ENCODE measurements at regions of chr3 and their contacts with region 1.

Region 1: GRCh38 chr3:32438596-32439344 is 47.1 kb downstream of the CMTM7 start:
- DNase-seq: peak; percentile 83
- ATAC-seq: peak; percentile 85
- H3K4me3 ChIP-seq: peak overlapping the region in 1 of 5 experiments; percentile 18
- H3K4me3 Mint-ChIP-seq: peak overlapping the region; percentile 81
- H3K27ac ChIP-seq: peak overlapping the region; percentile 81 to 82
- H3K27ac Mint-ChIP-seq: peak overlapping the region; percentile 96
- H3K4me1 ChIP-seq: peaks cover 68 to 74% of the 10 kb centered on the region in 2 donors
- H3K4me1 Mint-ChIP-seq: peaks cover 78% of the 10 kb centered on the region
- H3K27me3 ChIP-seq: no peaks in the 10 kb centered on the region
- H3K27me3 Mint-ChIP-seq: no peaks in the 10 kb centered on the region
- CTCF ChIP-seq: no peak

Region 2: GRCh38 chr3:32420126-32421038 is 18.4 kb before region 1 on chr3:
- CTCF ChIA-PET with region 1: interaction called, 15 read pairs
- POLR2A ChIA-PET with region 1: interaction called, 10 read pairs
- intact Hi-C with region 1: loop called (anchors 1 kb)
- DNase-seq: peak; percentile 80
- ATAC-seq: peak; percentile 77
- H3K4me3 ChIP-seq: peak overlapping the region in 3 of 5 experiments; percentile 2 to 38 (median 11)
- H3K4me3 Mint-ChIP-seq: peak overlapping the region; percentile 84
- H3K27ac ChIP-seq: peak overlapping the region; percentile 79 to 86
- H3K27ac Mint-ChIP-seq: peak overlapping the region; percentile 97
- H3K4me1 ChIP-seq: peaks cover 67 to 73% of the 10 kb centered on the region in 2 donors
- H3K4me1 Mint-ChIP-seq: peaks cover 84% of the 10 kb centered on the region
- H3K27me3 ChIP-seq: no peaks in the 10 kb centered on the region
- H3K27me3 Mint-ChIP-seq: no peaks in the 10 kb centered on the region
- CTCF ChIP-seq: no peak

Region 3: GRCh38 chr3:32428092-32429068 is 10.4 kb before region 1 on chr3:
- CTCF ChIA-PET with region 1: interaction called, 15 read pairs
- POLR2A ChIA-PET with region 1: interaction called, 10 read pairs
- intact Hi-C with region 1: loop called (anchors 1 kb)
- DNase-seq: peak; percentile 45
- ATAC-seq: peak; percentile 28
- H3K4me3 ChIP-seq: peak overlapping the region in 2 of 5 experiments; percentile 10 to 24
- H3K4me3 Mint-ChIP-seq: peak overlapping the region; percentile 51
- H3K27ac ChIP-seq: peak overlapping the region; percentile 52 to 65
- H3K27ac Mint-ChIP-seq: peak overlapping the region; percentile 76
- H3K4me1 ChIP-seq: peaks cover 79 to 87% of the 10 kb centered on the region in 2 donors
- H3K4me1 Mint-ChIP-seq: peaks cover 81% of the 10 kb centered on the region
- H3K27me3 ChIP-seq: no peaks in the 10 kb centered on the region
- H3K27me3 Mint-ChIP-seq: no peaks in the 10 kb centered on the region
- CTCF ChIP-seq: no peak

Region 4: GRCh38 chr3:32448686-32449474 is 10.1 kb after region 1 on chr3:
- CTCF ChIA-PET with region 1: interaction called, 46 read pairs
- POLR2A ChIA-PET with region 1: no interaction called
- intact Hi-C with region 1: no loop called
- DNase-seq: no peak
- ATAC-seq: no peak
- H3K4me3 ChIP-seq: no peak overlapping the region
- H3K4me3 Mint-ChIP-seq: no peak overlapping the region
- H3K27ac ChIP-seq: no peak overlapping the region
- H3K27ac Mint-ChIP-seq: no peak overlapping the region
- H3K4me1 ChIP-seq: peaks cover 10 to 20% of the 10 kb centered on the region in 2 donors
- H3K4me1 Mint-ChIP-seq: peaks cover 44% of the 10 kb centered on the region
- H3K27me3 ChIP-seq: no peaks in the 10 kb centered on the region
- H3K27me3 Mint-ChIP-seq: no peaks in the 10 kb centered on the region
- CTCF ChIP-seq: no peak

Region 5: GRCh38 chr3:32460031-32460749 is 21.4 kb after region 1 on chr3:
- CTCF ChIA-PET with region 1: interaction called, 46 read pairs
- POLR2A ChIA-PET with region 1: interaction called, 7 read pairs
- intact Hi-C with region 1: loop called (anchors 1 kb)
- DNase-seq: peak; percentile 94
- ATAC-seq: peak; percentile 73
- H3K4me3 ChIP-seq: peak overlapping the region in 3 of 5 experiments; percentile 29 to 39 (median 32)
- H3K4me3 Mint-ChIP-seq: peak overlapping the region; percentile 82
- H3K27ac ChIP-seq: peak overlapping the region; percentile 85 to 94
- H3K27ac Mint-ChIP-seq: peak overlapping the region; percentile 95
- H3K4me1 ChIP-seq: peaks cover 55 to 69% of the 10 kb centered on the region in 2 donors
- H3K4me1 Mint-ChIP-seq: peaks cover 48% of the 10 kb centered on the region
- H3K27me3 ChIP-seq: no peaks in the 10 kb centered on the region
- H3K27me3 Mint-ChIP-seq: no peaks in the 10 kb centered on the region
- CTCF ChIP-seq: no peak